ENCODE measurements at regions of chr3 and their contacts with region 1.

Region 1: GRCh38 chr3:179562591-179563270 is at the start of gene ACTL6A:
- DNase-seq: peak; percentile 95 to 99 (median 98)
- ATAC-seq: peak; percentile 90
- H3K4me3 ChIP-seq: peak within 1 kb of the TSS; percentile 71 to 92
- H3K4me3 Mint-ChIP-seq: peak within 1 kb of the TSS; percentile 99
- H3K27ac ChIP-seq: peak within 1 kb of the TSS; percentile 51 to 66
- H3K27ac Mint-ChIP-seq: peak within 1 kb of the TSS; percentile 96
- H3K4me1 ChIP-seq: peaks cover 16% of the 10 kb centered on the region
- H3K4me1 Mint-ChIP-seq: peaks cover 31% of the 10 kb centered on the region
- H3K27me3 ChIP-seq: no peaks in the 10 kb centered on the region
- H3K27me3 Mint-ChIP-seq: peaks cover 3% of the 10 kb centered on the region
- CTCF ChIP-seq: no peak
- total RNA-seq, gene ACTL6A: 18.2 to 18.7 TPM

Region 2: GRCh38 chr3:178436773-178437172 is 1126.0 kb before region 1 on chr3:
- CTCF ChIA-PET with region 1: no interaction called
- POLR2A ChIA-PET with region 1: no interaction called
- intact Hi-C with region 1: loop called in 1 of 2 experiments (anchors 5 kb)
- DNase-seq: peak in 1 of 9 experiments; percentile 12
- ATAC-seq: no peak
- H3K4me3 ChIP-seq: no peak overlapping the region
- H3K4me3 Mint-ChIP-seq: no peak overlapping the region
- H3K27ac ChIP-seq: no peak overlapping the region
- H3K27ac Mint-ChIP-seq: no peak overlapping the region
- H3K4me1 ChIP-seq: no peaks in the 10 kb centered on the region
- H3K4me1 Mint-ChIP-seq: no peaks in the 10 kb centered on the region
- H3K27me3 ChIP-seq: no peaks in the 10 kb centered on the region
- H3K27me3 Mint-ChIP-seq: peaks cover 2% of the 10 kb centered on the region
- CTCF ChIP-seq: peak; percentile 31

Region 3: GRCh38 chr3:179071550-179072397 is 491.0 kb before region 1 on chr3 and contains the start of gene ZMAT3:
- CTCF ChIA-PET with region 1: no interaction called
- POLR2A ChIA-PET with region 1: interaction called, 3 read pairs
- intact Hi-C with region 1: loop called in 1 of 2 experiments (anchors 10 kb)
- DNase-seq: peak; percentile 65 to 92 (median 85)
- ATAC-seq: peak; percentile 81
- H3K4me3 ChIP-seq: peak within 1 kb of the TSS; percentile 76 to 88
- H3K4me3 Mint-ChIP-seq: peak within 1 kb of the TSS; percentile 98
- H3K27ac ChIP-seq: peak within 1 kb of the TSS; percentile 80 to 83
- H3K27ac Mint-ChIP-seq: peak within 1 kb of the TSS; percentile 93
- H3K4me1 ChIP-seq: peaks cover 17% of the 10 kb centered on the region
- H3K4me1 Mint-ChIP-seq: peaks cover 61% of the 10 kb centered on the region
- H3K27me3 ChIP-seq: no peaks in the 10 kb centered on the region
- H3K27me3 Mint-ChIP-seq: no peaks in the 10 kb centered on the region
- CTCF ChIP-seq: no peak
- total RNA-seq, gene ZMAT3: 8.7 to 9.4 TPM

Region 4: DNA sequence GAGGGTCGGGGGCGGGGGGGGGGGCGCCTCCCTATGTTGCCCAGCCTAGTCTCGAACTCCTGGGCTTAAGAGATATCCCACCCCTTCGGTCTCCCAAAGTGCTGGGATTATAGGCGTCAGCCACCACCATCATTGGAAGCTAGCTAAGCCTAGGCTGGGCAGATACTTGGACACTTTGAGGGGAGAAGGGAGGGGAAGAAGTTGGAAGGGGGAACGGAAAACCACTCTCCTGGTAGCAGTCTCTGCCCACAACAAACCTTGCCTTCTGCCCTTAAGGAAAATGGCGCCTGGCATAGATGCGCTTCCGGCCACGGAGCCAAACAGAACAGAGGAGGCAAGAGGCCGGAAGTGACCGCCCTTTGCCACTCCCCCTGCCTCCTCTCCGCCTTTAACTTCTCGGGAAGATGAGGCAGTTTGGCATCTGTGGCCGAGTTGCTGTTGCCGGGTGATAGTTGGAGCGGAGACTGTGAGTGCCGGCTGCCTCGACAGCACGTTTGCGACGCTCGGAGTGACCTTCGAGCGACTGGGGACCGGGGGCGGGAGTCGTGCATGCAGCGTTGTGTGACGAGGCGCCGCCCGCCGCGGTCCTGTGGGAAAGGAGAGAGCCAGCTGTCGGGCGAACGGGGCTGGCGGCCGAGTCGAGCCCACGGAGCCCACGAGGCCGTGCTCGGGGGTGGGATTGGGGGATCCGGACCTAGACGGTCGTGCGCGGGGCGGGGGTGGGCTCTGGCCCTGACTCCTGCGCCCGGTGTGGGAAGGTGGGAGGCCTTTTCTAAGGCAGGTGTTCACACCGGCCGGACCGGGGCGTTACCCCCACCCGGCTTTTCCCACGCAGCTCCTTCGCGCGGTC is 215.2 kb before region 1 on chr3 and contains the start of gene MFN1:
- CTCF ChIA-PET with region 1: no interaction called
- POLR2A ChIA-PET with region 1: no interaction called
- intact Hi-C with region 1: loop called (anchors 1 to 5 kb)
- DNase-seq: peak; percentile 72 to 95 (median 88)
- ATAC-seq: peak; percentile 97
- H3K4me3 ChIP-seq: peak within 1 kb of the TSS; percentile 89 to 94
- H3K4me3 Mint-ChIP-seq: peak within 1 kb of the TSS; percentile 100
- H3K27ac ChIP-seq: peak within 1 kb of the TSS; percentile 68 to 77
- H3K27ac Mint-ChIP-seq: peak within 1 kb of the TSS; percentile 99
- H3K4me1 ChIP-seq: peaks cover 6% of the 10 kb centered on the region
- H3K4me1 Mint-ChIP-seq: peaks cover 35% of the 10 kb centered on the region
- H3K27me3 ChIP-seq: no peaks in the 10 kb centered on the region
- H3K27me3 Mint-ChIP-seq: no peaks in the 10 kb centered on the region
- CTCF ChIP-seq: no peak
- total RNA-seq, gene MFN1: 21.9 to 26.7 TPM

Region 5: GRCh38 chr3:179546814-179547635 is 15.7 kb before region 1 on chr3:
- CTCF ChIA-PET with region 1: no interaction called
- POLR2A ChIA-PET with region 1: no interaction called
- intact Hi-C with region 1: no loop called
- DNase-seq: no peak
- ATAC-seq: no peak
- H3K4me3 ChIP-seq: no peak overlapping the region
- H3K4me3 Mint-ChIP-seq: no peak overlapping the region
- H3K27ac ChIP-seq: no peak overlapping the region
- H3K27ac Mint-ChIP-seq: no peak overlapping the region
- H3K4me1 ChIP-seq: no peaks in the 10 kb centered on the region
- H3K4me1 Mint-ChIP-seq: no peaks in the 10 kb centered on the region
- H3K27me3 ChIP-seq: no peaks in the 10 kb centered on the region
- H3K27me3 Mint-ChIP-seq: peaks cover 3% of the 10 kb centered on the region
- CTCF ChIP-seq: no peak

Region 6: GRCh38 chr3:179604321-179605078 is 41.8 kb after region 1 on chr3 and contains the starts of genes MRPL47 and NDUFB5:
- CTCF ChIA-PET with region 1: no interaction called
- POLR2A ChIA-PET with region 1: interaction called, 5 read pairs
- intact Hi-C with region 1: loop called (anchors 1 kb)
- DNase-seq: peak; percentile 81 to 98 (median 93)
- ATAC-seq: peak; percentile 99
- H3K4me3 ChIP-seq: peak within 1 kb of the TSS; percentile 82 to 96
- H3K4me3 Mint-ChIP-seq: peak within 1 kb of the TSS; percentile 97
- H3K27ac ChIP-seq: peak within 1 kb of the TSS; percentile 93 to 98
- H3K27ac Mint-ChIP-seq: peak within 1 kb of the TSS; percentile 100
- H3K4me1 ChIP-seq: peaks cover 13% of the 10 kb centered on the region
- H3K4me1 Mint-ChIP-seq: peaks cover 55% of the 10 kb centered on the region
- H3K27me3 ChIP-seq: no peaks in the 10 kb centered on the region
- H3K27me3 Mint-ChIP-seq: no peaks in the 10 kb centered on the region
- CTCF ChIP-seq: no peak
- total RNA-seq, gene MRPL47: 36.4 to 37.8 TPM
- total RNA-seq, gene NDUFB5: 21.0 to 25.6 TPM

Region 7: DNA sequence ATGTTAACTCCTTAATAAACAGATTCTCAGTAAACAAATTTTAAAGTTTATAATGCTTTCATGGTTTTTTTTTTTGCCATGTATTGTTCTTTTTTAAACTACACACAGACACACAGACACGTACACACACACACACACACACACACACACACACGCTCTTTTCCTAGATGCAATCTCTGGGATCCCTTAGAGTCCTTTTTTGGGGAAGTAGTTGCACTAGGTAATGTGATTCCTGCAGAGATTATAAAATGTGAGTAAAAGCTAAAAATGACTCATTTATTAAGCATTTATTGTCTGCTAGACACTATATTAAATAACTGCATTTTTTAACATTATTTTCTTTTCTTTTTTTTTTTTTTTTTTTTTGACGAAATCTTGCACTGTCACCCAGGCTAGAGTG is 61.7 kb after region 1 on chr3:
- CTCF ChIA-PET with region 1: no interaction called
- POLR2A ChIA-PET with region 1: no interaction called
- intact Hi-C with region 1: no loop called
- DNase-seq: no peak
- ATAC-seq: no peak
- H3K4me3 ChIP-seq: no peak overlapping the region
- H3K4me3 Mint-ChIP-seq: no peak overlapping the region
- H3K27ac ChIP-seq: no peak overlapping the region
- H3K27ac Mint-ChIP-seq: no peak overlapping the region
- H3K4me1 ChIP-seq: no peaks in the 10 kb centered on the region
- H3K4me1 Mint-ChIP-seq: no peaks in the 10 kb centered on the region
- H3K27me3 ChIP-seq: no peaks in the 10 kb centered on the region
- H3K27me3 Mint-ChIP-seq: no peaks in the 10 kb centered on the region
- CTCF ChIP-seq: no peak

Region 8: DNA sequence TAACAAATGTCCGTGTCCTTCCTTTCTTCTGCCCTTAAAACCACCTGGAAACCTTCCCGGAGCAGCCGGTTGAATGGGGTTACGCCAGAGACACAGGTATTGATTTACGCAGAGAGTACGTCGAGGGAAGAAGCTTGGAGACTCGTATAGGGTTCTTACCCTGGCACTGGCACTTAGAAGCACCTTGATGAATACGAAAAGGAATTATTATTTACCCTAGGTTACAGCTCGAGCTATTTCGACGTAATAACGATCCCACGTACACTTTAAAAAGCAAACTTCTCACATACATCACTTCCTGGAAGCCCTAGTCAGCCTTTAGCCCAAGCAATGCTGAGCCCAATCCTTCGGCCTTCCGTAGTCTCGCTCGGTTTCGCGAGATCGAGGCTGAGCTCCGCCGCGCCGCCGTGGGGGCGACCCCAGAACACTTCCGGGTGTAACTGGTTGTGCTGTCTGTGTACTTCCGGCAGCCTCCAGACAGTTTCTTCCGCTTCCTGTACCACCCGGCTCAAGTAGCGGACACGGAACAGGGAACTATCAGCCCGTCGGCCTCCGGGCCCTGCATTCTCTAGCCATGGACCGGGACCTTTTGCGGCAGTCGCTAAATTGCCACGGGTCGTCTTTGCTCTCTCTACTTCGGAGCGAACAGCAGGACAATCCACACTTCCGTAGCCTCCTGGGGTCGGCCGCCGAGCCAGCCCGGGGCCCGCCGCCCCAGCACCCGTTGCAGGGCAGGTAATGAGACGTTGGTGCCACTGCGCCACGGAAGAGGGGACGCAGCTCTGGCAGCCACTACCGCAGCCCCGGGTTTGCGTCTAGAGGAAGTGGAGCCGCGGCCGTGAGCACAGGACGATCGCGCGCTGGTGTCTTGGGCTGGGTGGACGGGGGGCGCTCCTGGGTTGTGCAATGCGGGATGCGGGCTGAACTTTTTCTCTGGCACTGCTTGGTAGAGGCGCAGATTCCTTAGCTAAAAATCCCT is 1039.2 kb after region 1 on chr3 and contains the start of gene TTC14:
- CTCF ChIA-PET with region 1: no interaction called
- POLR2A ChIA-PET with region 1: no interaction called
- intact Hi-C with region 1: loop called in 1 of 2 experiments (anchors 1 kb)
- DNase-seq: peak; percentile 86 to 97 (median 93)
- ATAC-seq: peak; percentile 86
- H3K4me3 ChIP-seq: peak within 1 kb of the TSS; percentile 93 to 97
- H3K4me3 Mint-ChIP-seq: peak within 1 kb of the TSS; percentile 97
- H3K27ac ChIP-seq: peak within 1 kb of the TSS; percentile 94 to 95
- H3K27ac Mint-ChIP-seq: peak within 1 kb of the TSS; percentile 94
- H3K4me1 ChIP-seq: peaks cover 11% of the 10 kb centered on the region
- H3K4me1 Mint-ChIP-seq: peaks cover 43% of the 10 kb centered on the region
- H3K27me3 ChIP-seq: no peaks in the 10 kb centered on the region
- H3K27me3 Mint-ChIP-seq: peaks cover 15% of the 10 kb centered on the region
- CTCF ChIP-seq: no peak
- total RNA-seq, gene TTC14: 70.2 to 84.8 TPM